Endothelial cell of umbilical vein (primary cell): ENCODE measurements at regions of chr17 and their contacts with region 1.

Region 1: DNA sequence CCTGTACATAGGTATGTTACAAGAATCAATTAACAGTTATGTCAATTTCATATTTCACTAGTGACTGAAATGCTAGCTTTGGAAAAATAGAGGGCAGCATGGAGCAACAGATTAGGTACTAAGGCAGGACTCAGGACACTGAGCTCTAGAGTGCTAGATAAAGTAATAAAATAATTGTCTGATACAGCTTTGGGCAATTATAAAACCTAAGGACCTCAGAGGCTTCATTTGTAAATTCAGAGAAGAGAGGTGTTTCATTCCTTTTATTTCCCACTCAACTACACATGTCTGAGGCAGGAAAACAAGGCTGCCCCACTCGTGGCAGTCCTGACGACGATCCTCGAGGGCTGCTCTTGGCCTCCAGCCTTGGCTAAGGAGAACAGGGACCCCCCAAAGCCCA is 81.5 kb downstream of the CA4 start:
- DNase-seq: peak; percentile 45
- H3K4me3 ChIP-seq: no peak overlapping the region
- H3K27ac ChIP-seq: no peak overlapping the region
- H3K4me1 ChIP-seq: no peaks in the 10 kb centered on the region
- H3K27me3 ChIP-seq: no peaks in the 10 kb centered on the region
- CTCF ChIP-seq: peak; percentile 22 to 30
- POLR2A ChIP-seq: no peak

Region 2: DNA sequence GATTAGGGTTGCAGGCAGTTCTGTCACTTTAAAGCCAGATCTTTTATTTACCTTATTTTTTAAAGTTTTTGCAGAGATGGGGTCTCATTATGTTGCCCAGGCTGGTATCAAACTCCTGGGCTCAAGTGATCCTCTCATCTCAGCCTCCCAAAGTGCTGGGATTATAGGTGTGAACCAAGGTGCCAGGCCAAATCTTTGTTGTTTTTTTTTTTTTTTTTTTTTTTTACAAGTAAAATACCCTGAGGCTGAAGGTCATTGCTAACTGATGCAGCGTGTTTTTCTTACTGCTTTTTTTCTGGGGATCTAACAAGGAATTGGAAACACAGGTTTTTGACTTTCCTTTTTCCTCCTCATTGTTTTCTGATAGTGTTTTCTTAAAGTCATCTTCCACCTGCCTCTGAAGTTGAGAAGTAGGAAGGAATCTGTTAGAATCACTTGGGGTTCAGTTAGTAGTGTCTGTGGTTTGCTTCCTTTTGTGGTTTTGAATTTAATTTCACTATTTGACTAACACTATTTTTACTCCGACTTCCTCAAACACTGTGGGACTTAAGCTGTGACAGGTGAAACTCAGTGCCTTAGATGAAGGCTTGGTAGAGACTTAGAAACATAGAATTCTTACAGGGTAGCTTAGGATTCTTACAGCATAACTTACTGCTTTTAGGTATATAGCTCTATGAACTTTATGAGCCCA is 589.3 kb before region 1 on chr17:
- CTCF ChIA-PET with region 1: no interaction called
- POLR2A ChIA-PET with region 1: no interaction called
- dilution Hi-C with region 1: no loop called
- intact Hi-C with region 1: no loop called
- DNase-seq: no peak
- H3K4me3 ChIP-seq: no peak overlapping the region
- H3K27ac ChIP-seq: no peak overlapping the region
- H3K4me1 ChIP-seq: no peaks in the 10 kb centered on the region
- H3K27me3 ChIP-seq: no peaks in the 10 kb centered on the region
- CTCF ChIP-seq: no peak
- POLR2A ChIP-seq: no peak

Region 3: GRCh38 chr17:60249290-60249826 is 18.1 kb after region 1 on chr17:
- CTCF ChIA-PET with region 1: interaction called, 37 read pairs
- POLR2A ChIA-PET with region 1: interaction called, 4 read pairs
- dilution Hi-C with region 1: no loop called
- intact Hi-C with region 1: no loop called
- DNase-seq: peak; percentile 87
- H3K4me3 ChIP-seq: peak overlapping the region in 1 of 3 experiments; percentile 35
- H3K27ac ChIP-seq: peak overlapping the region; percentile 87
- H3K4me1 ChIP-seq: peaks cover 22% of the 10 kb centered on the region
- H3K27me3 ChIP-seq: no peaks in the 10 kb centered on the region
- CTCF ChIP-seq: no peak
- POLR2A ChIP-seq: no peak

Region 4: DNA sequence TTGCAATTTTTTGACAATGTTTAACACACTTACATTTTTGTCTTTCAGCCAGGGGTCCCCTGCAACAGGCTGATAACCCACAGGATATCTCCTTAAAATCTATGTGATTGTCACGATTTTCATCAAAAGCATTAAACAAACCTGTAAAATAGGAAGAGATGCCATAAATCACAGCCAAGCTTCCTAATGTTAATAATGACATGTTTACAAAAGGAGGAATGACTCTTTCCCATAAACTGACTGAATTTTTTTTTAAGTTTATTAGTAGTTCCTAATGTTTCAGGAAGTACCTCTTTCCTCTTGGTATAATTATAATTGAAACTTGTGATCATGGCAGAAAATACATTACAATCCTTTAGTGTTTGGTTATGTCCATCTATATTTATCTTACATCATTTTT is 38.2 kb after region 1 on chr17:
- CTCF ChIA-PET with region 1: interaction called, 13 read pairs
- POLR2A ChIA-PET with region 1: no interaction called
- dilution Hi-C with region 1: no loop called
- intact Hi-C with region 1: no loop called
- DNase-seq: peak; percentile 75
- H3K4me3 ChIP-seq: no peak overlapping the region
- H3K27ac ChIP-seq: no peak overlapping the region
- H3K4me1 ChIP-seq: peaks cover 10% of the 10 kb centered on the region
- H3K27me3 ChIP-seq: no peaks in the 10 kb centered on the region
- CTCF ChIP-seq: no peak
- POLR2A ChIP-seq: no peak

Region 5: GRCh38 chr17:60356940-60357339 is 125.7 kb after region 1 on chr17:
- CTCF ChIA-PET with region 1: interaction called, 17 read pairs
- POLR2A ChIA-PET with region 1: no interaction called
- dilution Hi-C with region 1: no loop called
- intact Hi-C with region 1: no loop called
- DNase-seq: no peak
- H3K4me3 ChIP-seq: no peak overlapping the region
- H3K27ac ChIP-seq: no peak overlapping the region
- H3K4me1 ChIP-seq: peaks cover 4% of the 10 kb centered on the region
- H3K27me3 ChIP-seq: no peaks in the 10 kb centered on the region
- CTCF ChIP-seq: no peak
- POLR2A ChIP-seq: no peak

Region 6: GRCh38 chr17:60421273-60421934 is 190.2 kb after region 1 on chr17:
- CTCF ChIA-PET with region 1: interaction called, 14 read pairs
- POLR2A ChIA-PET with region 1: no interaction called
- dilution Hi-C with region 1: no loop called
- intact Hi-C with region 1: loop called (anchors 2 kb)
- DNase-seq: peak; percentile 71
- H3K4me3 ChIP-seq: peak overlapping the region; percentile 19 to 61 (median 46)
- H3K27ac ChIP-seq: peak overlapping the region; percentile 47
- H3K4me1 ChIP-seq: peaks cover 3% of the 10 kb centered on the region
- H3K27me3 ChIP-seq: no peaks in the 10 kb centered on the region
- CTCF ChIP-seq: peak; percentile 85 to 99
- POLR2A ChIP-seq: no peak

Region 7: GRCh38 chr17:60435244-60436167 is 204.3 kb after region 1 on chr17:
- CTCF ChIA-PET with region 1: interaction called, 8 read pairs
- POLR2A ChIA-PET with region 1: no interaction called
- dilution Hi-C with region 1: no loop called
- intact Hi-C with region 1: loop called (anchors 1 kb)
- DNase-seq: peak; percentile 75
- H3K4me3 ChIP-seq: no peak overlapping the region
- H3K27ac ChIP-seq: no peak overlapping the region
- H3K4me1 ChIP-seq: peaks cover 2% of the 10 kb centered on the region
- H3K27me3 ChIP-seq: no peaks in the 10 kb centered on the region
- CTCF ChIP-seq: peak; percentile 75 to 77
- POLR2A ChIP-seq: no peak